MCF 10A (cell line): ENCODE measurements at regions of chr7 and their contacts with region 1.

Region 1: GRCh38 chr7:140810830-140811556 is 113.7 kb downstream of the BRAF start:
- DNase-seq: peak; percentile 77
- H3K4me3 Mint-ChIP-seq: no peak overlapping the region
- H3K27ac Mint-ChIP-seq: no peak overlapping the region
- H3K4me1 Mint-ChIP-seq: peaks cover 6% of the 10 kb centered on the region
- H3K27me3 Mint-ChIP-seq: no peaks in the 10 kb centered on the region
- CTCF ChIP-seq: peak; percentile 79

Region 2: DNA sequence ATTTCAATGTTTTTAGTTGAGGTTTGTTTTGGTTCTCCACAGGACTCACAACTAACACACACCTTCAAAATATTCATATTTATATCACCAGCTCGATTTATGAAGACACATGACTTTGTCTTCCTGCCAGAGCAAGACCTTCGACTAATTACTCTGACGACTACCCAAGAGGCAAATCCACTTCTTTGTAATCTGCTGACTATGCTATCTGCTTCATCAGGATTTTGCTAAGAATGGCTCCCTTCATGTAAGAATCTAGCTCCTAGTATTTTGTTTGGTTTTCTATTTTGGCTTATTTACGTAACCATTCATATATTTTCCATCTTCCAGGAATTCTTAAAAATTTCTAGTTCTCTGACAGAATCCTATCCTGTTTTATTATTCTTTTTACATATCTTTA is 20.7 kb after region 1 on chr7:
- CTCF ChIA-PET with region 1: interaction called, 10 read pairs
- POLR2A ChIA-PET with region 1: no interaction called
- intact Hi-C with region 1: no loop called
- DNase-seq: no peak
- H3K4me3 Mint-ChIP-seq: no peak overlapping the region
- H3K27ac Mint-ChIP-seq: no peak overlapping the region
- H3K4me1 Mint-ChIP-seq: no peaks in the 10 kb centered on the region
- H3K27me3 Mint-ChIP-seq: no peaks in the 10 kb centered on the region
- CTCF ChIP-seq: no peak

Region 3: DNA sequence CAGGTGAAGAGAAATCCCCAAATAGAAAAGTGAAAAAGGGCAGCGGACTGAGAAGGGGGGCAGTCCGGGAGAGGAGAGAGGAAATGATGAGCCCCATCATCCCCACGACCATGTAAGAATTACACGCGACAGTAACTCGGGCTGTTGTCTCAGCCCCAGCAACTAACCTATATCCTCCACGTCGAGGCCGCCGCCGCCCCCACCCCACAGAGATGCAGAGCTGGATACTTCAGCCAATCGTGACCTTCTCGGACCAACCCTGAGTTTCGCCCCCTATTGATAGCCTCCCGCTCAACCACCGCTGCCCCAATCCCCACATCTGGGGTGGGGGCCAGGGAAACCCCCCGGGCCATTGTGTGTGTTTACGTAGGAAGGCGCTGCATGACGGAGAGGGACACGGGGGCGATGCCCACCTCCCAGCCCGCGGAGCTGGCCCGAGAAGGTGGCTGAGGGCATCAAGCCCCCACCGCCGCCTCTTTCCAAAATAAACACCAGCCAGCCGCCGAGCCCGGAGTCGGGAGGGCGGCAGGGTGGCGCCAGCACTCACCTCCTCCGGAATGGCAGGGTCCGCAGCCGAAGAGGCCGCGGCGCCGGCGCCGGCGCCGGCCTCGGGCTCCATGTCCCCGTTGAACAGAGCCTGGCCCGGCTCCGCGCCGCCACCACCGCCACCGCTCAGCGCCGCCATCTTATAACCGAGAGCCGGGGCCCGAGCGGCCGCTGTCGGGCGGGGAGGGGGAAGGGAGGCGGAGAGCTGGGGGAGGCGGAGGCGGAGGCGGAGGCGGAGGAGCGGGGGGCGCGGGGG is 113.2 kb after region 1 on chr7:
- CTCF ChIA-PET with region 1: interaction called, 10 read pairs
- POLR2A ChIA-PET with region 1: interaction called, 4 read pairs
- intact Hi-C with region 1: loop called (anchors 1 kb)
- DNase-seq: peak; percentile 58
- H3K4me3 Mint-ChIP-seq: no peak overlapping the region
- H3K27ac Mint-ChIP-seq: no peak overlapping the region
- H3K4me1 Mint-ChIP-seq: peaks cover 12% of the 10 kb centered on the region
- H3K27me3 Mint-ChIP-seq: no peaks in the 10 kb centered on the region
- CTCF ChIP-seq: peak; percentile 30

Region 4: GRCh38 chr7:140983802-140984201 is 172.8 kb after region 1 on chr7:
- CTCF ChIA-PET with region 1: interaction called, 9 read pairs
- POLR2A ChIA-PET with region 1: no interaction called
- intact Hi-C with region 1: loop called (anchors 1 kb)
- DNase-seq: peak; percentile 47
- H3K4me3 Mint-ChIP-seq: no peak overlapping the region
- H3K27ac Mint-ChIP-seq: no peak overlapping the region
- H3K4me1 Mint-ChIP-seq: no peaks in the 10 kb centered on the region
- H3K27me3 Mint-ChIP-seq: peaks cover 10% of the 10 kb centered on the region
- CTCF ChIP-seq: peak; percentile 21

Region 5: GRCh38 chr7:141076377-141076776 is 265.4 kb after region 1 on chr7:
- CTCF ChIA-PET with region 1: no interaction called
- POLR2A ChIA-PET with region 1: no interaction called
- intact Hi-C with region 1: no loop called
- DNase-seq: no peak
- H3K4me3 Mint-ChIP-seq: no peak overlapping the region
- H3K27ac Mint-ChIP-seq: no peak overlapping the region
- H3K4me1 Mint-ChIP-seq: no peaks in the 10 kb centered on the region
- H3K27me3 Mint-ChIP-seq: peaks cover 21% of the 10 kb centered on the region
- CTCF ChIP-seq: no peak